ENCODE measurements at regions of chr7 and their contacts with region 1.

Region 1: DNA sequence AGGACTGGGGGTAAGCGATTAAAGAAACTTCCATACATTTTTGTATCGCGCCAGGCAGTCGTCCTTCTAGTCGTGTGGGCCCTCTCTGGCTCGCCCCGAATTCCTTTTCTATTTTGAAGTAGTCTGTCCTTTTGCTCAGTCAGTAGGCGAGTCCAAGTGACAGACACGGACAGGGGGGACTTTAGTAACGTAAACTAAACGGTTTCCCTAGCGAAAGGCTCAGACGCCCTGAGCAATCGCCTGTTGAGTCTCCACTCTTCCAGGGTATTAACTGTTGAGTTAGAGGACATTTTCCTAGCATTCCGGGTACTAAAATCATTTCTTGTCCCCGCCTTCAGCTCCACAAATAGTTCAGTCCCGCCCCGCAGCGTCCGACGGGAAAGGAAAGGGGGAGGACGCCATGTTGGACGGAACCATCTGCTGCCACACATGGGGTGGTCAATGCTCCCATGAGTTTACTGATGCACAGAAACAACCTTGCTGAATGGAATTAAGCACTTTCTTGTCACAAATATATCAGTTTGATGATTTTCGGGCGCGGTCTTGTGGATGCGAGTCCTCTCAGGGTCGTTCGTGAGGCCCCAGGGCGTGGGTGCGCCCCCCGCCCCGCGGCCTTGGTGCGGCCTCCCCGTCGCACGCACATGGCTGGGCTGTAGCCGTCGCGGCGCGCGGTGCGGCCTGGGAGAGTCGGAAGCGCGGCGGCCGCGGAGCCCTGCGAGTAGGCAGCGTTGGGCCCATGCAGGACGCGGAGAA is at the start of gene EIF3B:
- DNase-seq: peak; percentile 94
- ATAC-seq: peak; percentile 90
- H3K4me3 Mint-ChIP-seq: peak within 1 kb of the TSS; percentile 86
- H3K27ac Mint-ChIP-seq: peak within 1 kb of the TSS; percentile 99
- H3K4me1 Mint-ChIP-seq: peaks cover 37% of the 10 kb centered on the region
- H3K27me3 Mint-ChIP-seq: no peaks in the 10 kb centered on the region
- total RNA-seq, gene EIF3B: 185 to 227 TPM

Region 2: GRCh38 chr7:1532483-1533424 is 821.6 kb before region 1 on chr7:
- CTCF ChIA-PET with region 1: no interaction called
- POLR2A ChIA-PET with region 1: no interaction called
- intact Hi-C with region 1: loop called in 1 of 2 experiments (anchors 1 kb)
- DNase-seq: peak; percentile 78
- ATAC-seq: peak; percentile 65
- H3K4me3 Mint-ChIP-seq: peak overlapping the region; percentile 89
- H3K27ac Mint-ChIP-seq: peak overlapping the region; percentile 89
- H3K4me1 Mint-ChIP-seq: peaks cover 27% of the 10 kb centered on the region
- H3K27me3 Mint-ChIP-seq: no peaks in the 10 kb centered on the region

Region 3: GRCh38 chr7:1919539-1920265 is 434.7 kb before region 1 on chr7:
- CTCF ChIA-PET with region 1: no interaction called
- POLR2A ChIA-PET with region 1: no interaction called
- intact Hi-C with region 1: loop called in 1 of 2 experiments (anchors 5 kb)
- DNase-seq: no peak
- ATAC-seq: peak; percentile 17
- H3K4me3 Mint-ChIP-seq: peak overlapping the region; percentile 68
- H3K27ac Mint-ChIP-seq: peak overlapping the region; percentile 76
- H3K4me1 Mint-ChIP-seq: peaks cover 70% of the 10 kb centered on the region
- H3K27me3 Mint-ChIP-seq: peaks cover 11% of the 10 kb centered on the region

Region 4: DNA sequence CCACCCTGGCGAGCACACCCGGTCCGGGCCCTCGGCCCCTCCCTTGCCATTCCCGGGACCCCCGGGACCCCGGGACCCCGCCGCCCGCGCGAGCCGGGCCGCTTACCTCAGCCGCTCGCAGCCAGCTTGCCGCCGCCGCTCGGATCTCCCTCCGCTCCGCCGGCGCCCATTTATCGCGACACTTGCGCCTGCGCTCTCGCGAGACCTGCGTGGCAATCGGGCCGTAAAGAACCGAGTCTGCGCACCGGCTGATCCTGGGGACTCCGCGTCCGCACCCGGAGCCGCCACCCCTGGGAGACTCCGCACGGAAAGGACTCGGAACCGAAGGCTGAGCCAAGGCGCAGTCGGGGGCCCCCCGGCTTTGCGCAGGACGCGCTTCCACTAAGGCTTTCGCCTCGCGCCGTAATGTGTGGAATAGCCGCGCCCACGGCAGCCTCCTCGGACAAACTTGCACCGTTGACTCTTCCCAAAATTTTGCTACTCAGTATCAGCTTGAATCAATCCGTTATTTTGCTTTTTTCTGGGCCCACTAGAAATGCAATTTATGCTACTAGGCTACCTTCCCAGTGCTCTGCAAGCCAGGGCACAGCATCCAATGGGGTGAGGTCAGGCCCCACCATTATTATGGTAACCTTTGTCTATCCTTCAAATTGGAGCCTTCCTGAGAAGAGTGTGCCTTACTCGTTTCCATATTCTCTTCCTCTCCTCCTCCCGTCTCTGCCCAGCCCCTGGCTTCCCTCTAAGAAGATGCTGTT is 121.4 kb before region 1 on chr7 and contains the start of gene MAD1L1:
- CTCF ChIA-PET with region 1: interaction called, 3 read pairs
- POLR2A ChIA-PET with region 1: no interaction called
- intact Hi-C with region 1: loop called in 1 of 2 experiments (anchors 1 kb)
- DNase-seq: peak; percentile 95
- ATAC-seq: peak; percentile 94
- H3K4me3 Mint-ChIP-seq: peak within 1 kb of the TSS; percentile 83
- H3K27ac Mint-ChIP-seq: peak within 1 kb of the TSS; percentile 86
- H3K4me1 Mint-ChIP-seq: peaks cover 26% of the 10 kb centered on the region
- H3K27me3 Mint-ChIP-seq: no peaks in the 10 kb centered on the region
- total RNA-seq, gene MAD1L1: 50.2 to 61.7 TPM

Region 5: DNA sequence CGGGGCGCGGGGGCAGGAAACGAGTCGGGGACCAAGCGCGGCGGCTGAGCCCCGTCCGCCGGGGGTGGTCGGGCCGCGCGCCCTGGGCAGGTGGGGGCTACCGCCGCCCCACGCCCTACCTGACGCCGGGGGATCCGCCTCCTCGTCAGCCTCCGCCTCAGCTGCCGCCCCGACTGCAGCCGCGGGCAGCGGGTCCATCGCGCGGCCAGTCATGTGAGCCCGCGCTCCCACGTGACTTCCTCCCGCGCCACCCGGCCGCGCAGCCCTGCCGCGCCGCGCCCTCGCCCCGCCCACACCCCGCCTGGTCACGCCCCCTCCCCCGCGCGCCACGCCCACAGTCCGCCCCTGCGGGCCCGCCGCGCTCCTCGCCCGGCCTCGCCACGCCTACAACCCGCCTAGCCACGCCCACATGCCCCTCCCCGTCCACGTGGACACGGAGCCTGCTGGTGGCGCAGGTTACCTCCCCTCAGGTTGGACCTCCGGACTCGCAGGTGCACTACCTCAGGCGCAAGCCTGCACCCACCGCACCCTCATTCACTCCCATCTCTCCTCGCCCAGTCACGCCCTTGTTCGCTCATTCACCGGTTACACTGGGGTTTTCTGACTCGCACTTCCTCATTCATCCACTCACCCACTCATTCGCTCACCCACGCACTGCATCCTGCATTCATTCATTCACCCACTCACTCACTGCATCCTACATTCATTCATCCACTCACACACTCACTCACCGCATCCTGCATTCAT is 40.0 kb before region 1 on chr7 and contains the start of gene SNX8:
- CTCF ChIA-PET with region 1: interaction called, 3 read pairs
- POLR2A ChIA-PET with region 1: interaction called, 4 read pairs
- intact Hi-C with region 1: loop called (anchors 1 to 2 kb)
- DNase-seq: peak; percentile 97
- ATAC-seq: peak; percentile 89
- H3K4me3 Mint-ChIP-seq: no peak within 1 kb of the TSS
- H3K27ac Mint-ChIP-seq: peak within 1 kb of the TSS; percentile 62
- H3K4me1 Mint-ChIP-seq: peaks cover 8% of the 10 kb centered on the region
- H3K27me3 Mint-ChIP-seq: no peaks in the 10 kb centered on the region
- total RNA-seq, gene SNX8: 37.1 to 42.4 TPM

Region 6: DNA sequence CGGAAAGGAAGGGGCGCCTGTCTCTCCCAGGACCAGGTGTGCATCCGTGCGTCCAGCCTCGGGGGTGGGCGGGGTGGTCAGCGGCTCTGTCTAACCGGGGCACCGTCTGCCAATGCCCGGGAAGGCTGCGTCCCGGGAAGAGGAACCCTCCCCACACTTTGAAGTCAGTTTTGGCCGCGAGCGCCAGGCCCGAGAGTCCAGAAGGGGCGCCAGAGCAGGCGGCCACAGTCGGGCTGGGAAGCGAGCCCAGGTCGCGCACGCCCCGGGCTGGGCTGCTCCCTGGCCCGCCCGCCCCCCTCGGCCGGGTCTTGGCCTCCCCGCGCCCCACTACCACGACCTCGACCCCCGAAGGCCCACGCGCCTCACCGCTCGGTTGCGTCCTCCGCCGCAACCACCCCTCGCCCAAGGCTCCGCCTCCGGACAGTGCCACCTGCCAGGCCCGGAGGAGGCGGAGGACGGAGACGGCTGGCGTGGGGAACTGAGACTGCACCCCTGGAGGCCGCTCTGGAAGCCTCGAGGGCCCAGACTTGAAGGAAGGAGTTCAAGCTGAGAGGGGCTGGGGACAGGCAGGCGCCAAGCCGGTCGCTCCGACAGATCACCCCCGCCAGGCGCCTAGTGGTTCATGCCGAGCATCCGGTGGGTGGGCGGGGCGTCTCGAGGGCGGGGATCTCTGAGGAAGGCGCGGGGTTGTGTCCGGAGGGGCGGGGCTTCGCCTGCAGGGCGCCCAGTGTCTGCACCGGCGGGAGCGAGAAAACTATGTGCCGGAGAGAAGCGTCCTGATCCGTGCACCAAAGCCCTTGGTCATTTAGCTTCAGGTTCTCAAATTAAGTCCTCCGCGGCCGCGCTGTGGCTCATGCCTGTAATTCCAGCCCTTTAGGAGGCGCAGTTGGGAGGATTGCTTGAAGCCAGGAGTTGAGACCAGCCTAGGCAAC is 201.0 kb after region 1 on chr7 and contains the start of gene BRAT1:
- CTCF ChIA-PET with region 1: no interaction called
- POLR2A ChIA-PET with region 1: no interaction called
- intact Hi-C with region 1: loop called (anchors 1 to 5 kb)
- DNase-seq: peak; percentile 99
- ATAC-seq: peak; percentile 89
- H3K4me3 Mint-ChIP-seq: peak within 1 kb of the TSS; percentile 89
- H3K27ac Mint-ChIP-seq: peak within 1 kb of the TSS; percentile 85
- H3K4me1 Mint-ChIP-seq: peaks cover 33% of the 10 kb centered on the region
- H3K27me3 Mint-ChIP-seq: no peaks in the 10 kb centered on the region
- total RNA-seq, gene BRAT1: 34.7 to 35.9 TPM